ENCODE measurements at regions of chr7 and their contacts with region 1.

Region 1: DNA sequence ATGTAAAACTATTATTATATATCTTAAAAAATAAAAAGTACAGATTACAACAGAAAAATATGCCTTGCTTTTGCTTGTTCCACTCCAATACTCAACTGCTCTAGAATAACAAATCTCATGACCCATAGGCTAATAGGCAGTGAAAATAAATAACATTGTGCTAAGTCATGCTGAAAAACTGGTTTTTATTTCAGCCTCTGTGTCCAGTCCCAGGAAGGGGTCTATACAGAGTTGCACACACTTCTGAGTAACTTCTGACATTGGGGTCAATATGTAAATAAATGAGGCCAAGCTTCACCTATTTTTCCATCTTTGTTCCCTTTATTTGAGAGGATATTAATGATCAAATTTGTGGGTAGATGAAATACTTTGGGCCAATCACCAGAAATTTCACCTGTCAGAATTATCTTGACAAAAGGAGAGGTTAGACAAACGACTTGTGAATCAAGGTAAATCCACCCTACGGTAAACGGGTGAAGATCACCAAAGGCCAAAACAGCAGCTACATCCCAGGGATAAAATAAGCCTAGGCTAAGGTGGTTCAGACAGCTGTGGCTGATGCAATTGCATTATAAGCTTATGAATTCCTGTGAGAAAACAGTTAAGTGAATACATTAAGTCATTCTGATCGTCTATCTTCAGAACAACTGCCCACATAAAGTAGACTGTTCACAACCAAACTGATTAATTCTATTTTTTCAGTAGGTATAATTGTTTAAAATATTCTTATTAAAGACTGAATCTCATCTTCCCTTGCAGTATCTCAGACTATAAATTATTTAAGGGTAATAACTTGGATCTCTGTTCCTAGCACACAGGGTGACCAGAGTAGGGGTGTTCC is 87.4 kb downstream of the UBE2H start:
- DNase-seq: no peak
- ATAC-seq: no peak

Region 2: DNA sequence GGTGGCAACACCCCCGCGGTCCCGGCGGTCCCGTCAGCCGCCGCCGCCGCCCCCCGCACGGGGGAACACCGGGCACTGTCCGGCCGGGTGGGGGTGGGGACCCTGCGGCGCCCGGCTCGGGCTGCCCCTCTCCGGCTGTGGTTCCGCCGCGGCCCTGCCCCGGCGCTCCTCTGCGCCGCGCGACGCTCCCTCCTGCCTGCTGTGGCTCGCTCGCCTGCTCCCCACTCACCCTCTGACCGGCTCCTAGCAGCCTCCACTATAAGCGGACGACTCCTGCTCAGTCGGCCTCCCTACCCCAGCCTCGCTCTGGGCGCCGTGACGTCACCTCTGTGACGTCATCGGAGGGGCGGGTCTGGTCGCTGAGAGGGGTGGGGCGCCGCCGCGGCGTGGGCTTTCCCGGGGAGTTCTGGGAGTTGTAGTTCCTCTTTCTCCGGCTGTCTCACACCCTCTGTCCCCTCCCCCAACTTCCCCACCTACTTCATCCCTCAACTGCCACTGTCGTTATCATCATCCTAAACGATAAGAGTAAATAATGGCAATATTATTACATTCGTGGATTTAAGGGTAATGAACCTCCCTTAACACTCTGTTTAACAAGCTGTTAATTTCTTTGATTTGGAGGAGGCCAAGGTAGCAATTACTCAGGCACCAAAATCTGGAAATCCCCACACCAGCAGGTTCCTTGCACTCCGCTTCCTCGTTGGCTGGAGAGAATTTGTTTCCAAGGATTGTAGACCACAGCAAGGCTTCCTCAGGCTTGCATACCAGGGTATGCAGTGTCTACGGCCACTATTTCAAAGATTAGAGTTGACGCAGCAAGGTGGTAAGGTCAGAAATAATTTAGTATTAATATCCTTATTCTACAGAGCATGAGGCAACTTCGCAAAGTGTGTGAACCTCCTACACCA is 87.6 kb after region 1 on chr7 and contains the start of gene UBE2H:
- intact Hi-C with region 1: loop called in 1 of 2 experiments (anchors 5 kb)
- DNase-seq: peak; percentile 91
- ATAC-seq: peak; percentile 91 to 93
- total RNA-seq, gene UBE2H: 65.5 to 77.8 TPM